ENCODE measurements at regions of chr3 and their contacts with region 1.

Region 1: GRCh38 chr3:155805802-155806618 is at the start of gene C3orf33:
- DNase-seq: peak; percentile 20 to 45
- ATAC-seq: peak; percentile 88
- H3K4me3 ChIP-seq: peak within 1 kb of the TSS; percentile 77 to 99 (median 80)
- H3K27ac ChIP-seq: peak within 1 kb of the TSS; percentile 81 to 92 (median 88)
- H3K4me1 ChIP-seq: no peaks in the 10 kb centered on the region
- H3K27me3 ChIP-seq: no peaks in the 10 kb centered on the region
- CTCF ChIP-seq: peak; percentile 77 to 90 (median 83)
- POLR2A ChIP-seq: no peak
- total RNA-seq, gene C3orf33: 1.4 to 6.1 (median 3.9) TPM

Region 2: DNA sequence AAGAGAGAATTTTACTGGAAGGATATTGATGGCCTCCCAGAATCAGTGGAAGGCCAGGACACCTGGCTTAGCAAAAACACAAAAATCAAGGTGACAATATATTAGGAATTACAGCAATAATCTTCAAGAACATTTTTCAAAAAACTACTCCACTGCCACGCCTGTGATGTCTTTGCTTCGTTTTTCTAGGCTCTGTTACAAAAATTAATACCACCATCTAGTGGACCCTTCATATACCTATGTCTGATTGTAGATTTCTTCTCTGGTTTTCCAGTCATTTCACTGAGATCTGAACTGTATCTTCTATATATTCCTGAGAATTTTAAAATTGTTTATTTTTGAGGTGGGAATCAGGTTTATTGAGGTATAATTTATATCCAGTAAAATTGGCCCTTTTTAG is 53.8 kb after region 1 on chr3:
- in situ Hi-C with region 1: loop called in 2 of 4 experiments (anchors 10 kb)
- intact Hi-C with region 1: no loop called
- DNase-seq: no peak
- ATAC-seq: no peak
- H3K4me3 ChIP-seq: no peak overlapping the region
- H3K27ac ChIP-seq: no peak overlapping the region
- H3K4me1 ChIP-seq: peaks cover 0 to 3% of the 10 kb centered on the region in 2 donors
- H3K27me3 ChIP-seq: no peaks in the 10 kb centered on the region
- CTCF ChIP-seq: no peak
- POLR2A ChIP-seq: no peak

Region 3: DNA sequence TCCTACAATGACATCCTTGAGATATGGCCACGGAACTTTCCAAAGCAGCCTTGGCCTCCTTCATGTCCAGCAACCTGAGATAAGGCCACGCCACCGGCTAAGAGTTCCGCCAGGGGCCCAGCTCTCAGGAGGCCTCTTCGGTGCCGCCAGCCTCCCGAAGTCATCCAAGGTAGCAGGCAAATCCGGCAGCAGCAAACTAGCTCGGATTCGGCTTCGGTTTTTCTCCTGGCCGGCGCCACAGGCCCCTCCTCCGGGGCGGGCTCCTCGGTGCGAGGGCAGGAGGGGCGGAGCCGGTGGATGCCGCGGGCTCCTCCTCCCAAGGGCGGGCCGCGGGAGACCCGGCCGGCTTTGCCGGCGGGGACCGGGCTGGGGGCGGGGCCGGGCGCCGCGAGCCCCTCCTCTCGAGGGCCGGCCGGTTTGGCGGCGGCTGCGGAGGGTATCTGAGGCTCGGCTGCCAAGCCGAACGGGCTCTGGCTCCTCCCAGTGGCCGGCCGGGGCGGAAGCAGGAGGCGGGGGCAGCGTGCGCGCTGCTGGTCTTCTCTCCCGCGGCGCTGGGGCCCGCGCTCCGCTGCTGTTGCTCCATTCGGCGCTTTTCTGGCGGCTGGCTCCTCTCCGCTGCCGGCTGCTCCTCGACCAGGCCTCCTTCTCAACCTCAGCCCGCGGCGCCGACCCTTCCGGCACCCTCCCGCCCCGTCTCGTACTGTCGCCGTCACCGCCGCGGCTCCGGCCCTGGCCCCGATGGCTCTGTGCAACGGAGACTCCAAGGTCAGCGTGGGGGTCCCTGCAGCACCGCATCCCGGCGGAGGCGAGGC is 64.3 kb after region 1 on chr3 and contains the start of gene GMPS:
- in situ Hi-C with region 1: loop called in 2 of 4 experiments (anchors 10 kb)
- intact Hi-C with region 1: loop called (anchors 1 kb)
- DNase-seq: peak; percentile 84 to 93
- ATAC-seq: peak; percentile 92
- H3K4me3 ChIP-seq: peak within 1 kb of the TSS; percentile 84 to 99 (median 92)
- H3K27ac ChIP-seq: peak within 1 kb of the TSS; percentile 86 to 97 (median 93)
- H3K4me1 ChIP-seq: peaks cover 21 to 24% of the 10 kb centered on the region in 2 donors
- H3K27me3 ChIP-seq: no peaks in the 10 kb centered on the region
- CTCF ChIP-seq: peak; percentile 50 to 86 (median 74)
- POLR2A ChIP-seq: peak; percentile 72 to 76
- total RNA-seq, gene GMPS: 26.7 to 34.7 (median 32.5) TPM